ENCODE measurements at regions of chr9 and their contacts with region 1.

Region 1: GRCh38 chr9:35518226-35518821 is 28.4 kb downstream of the RUSC2 start:
- DNase-seq: peak; percentile 81
- H3K4me3 ChIP-seq: no peak overlapping the region
- CTCF ChIP-seq: no peak

Region 2: GRCh38 chr9:35395076-35395705 is 123.1 kb before region 1 on chr9:
- CTCF ChIA-PET with region 1: no interaction called
- POLR2A ChIA-PET with region 1: no interaction called
- DNase-seq: no peak
- H3K4me3 ChIP-seq: no peak overlapping the region
- CTCF ChIP-seq: no peak

Region 3: DNA sequence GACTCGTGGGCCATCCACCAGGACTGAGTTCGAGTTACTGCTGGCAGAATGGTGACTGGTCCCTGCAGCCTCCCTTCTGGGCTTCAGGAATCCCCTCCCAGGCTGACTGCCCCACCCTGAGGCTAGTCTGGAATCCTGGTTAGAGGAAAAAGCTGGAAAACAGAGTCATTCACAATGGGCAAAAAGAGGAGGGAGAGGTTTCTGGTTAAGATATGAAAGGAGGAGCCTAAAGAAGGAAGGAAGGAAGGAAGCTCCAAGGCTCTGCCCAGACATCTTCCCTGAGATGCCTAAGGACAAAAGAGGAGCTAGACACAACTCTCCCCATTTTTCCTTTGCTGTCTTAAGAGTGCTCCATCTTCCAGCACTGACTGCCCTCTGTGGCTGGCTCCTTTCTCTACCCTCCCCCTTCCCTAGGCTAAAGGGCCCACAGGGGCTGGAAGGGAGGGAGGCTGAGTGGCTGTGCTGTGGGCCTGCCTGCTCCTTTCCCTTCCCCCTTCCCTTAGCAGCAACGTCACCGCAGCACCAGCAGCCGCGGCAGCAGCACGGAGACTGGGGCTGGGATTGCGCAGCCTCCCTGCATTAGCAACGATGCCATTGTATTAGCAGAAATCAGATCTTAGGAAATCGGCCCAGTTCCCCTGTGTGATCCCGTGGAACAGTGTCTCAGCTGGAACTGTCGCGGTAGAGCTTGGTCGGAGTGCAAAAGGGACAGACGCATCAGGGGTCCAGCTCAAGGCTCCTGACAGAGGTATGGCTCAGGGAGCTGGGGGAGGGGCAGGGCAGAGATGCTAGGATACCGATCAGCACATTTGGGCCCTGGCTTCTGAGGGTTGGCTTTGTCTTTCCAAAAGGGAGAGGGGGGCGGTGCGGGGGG is 20.3 kb after region 1 on chr9:
- CTCF ChIA-PET with region 1: interaction called, 7 read pairs
- POLR2A ChIA-PET with region 1: interaction called, 17 read pairs
- DNase-seq: no peak
- H3K4me3 ChIP-seq: peak overlapping the region; percentile 67
- CTCF ChIP-seq: no peak

Region 4: GRCh38 chr9:35603987-35604577 is 85.8 kb after region 1 on chr9:
- CTCF ChIA-PET with region 1: interaction called, 17 read pairs
- POLR2A ChIA-PET with region 1: no interaction called
- DNase-seq: peak; percentile 96
- H3K4me3 ChIP-seq: peak overlapping the region; percentile 72
- CTCF ChIP-seq: peak; percentile 92

Region 5: GRCh38 chr9:35932735-35933134 is 414.4 kb after region 1 on chr9:
- CTCF ChIA-PET with region 1: no interaction called
- POLR2A ChIA-PET with region 1: no interaction called
- DNase-seq: no peak
- H3K4me3 ChIP-seq: no peak overlapping the region
- CTCF ChIP-seq: no peak

Measured in AG04449 (cell line).